ENCODE measurements at regions of chr9 and their contacts with region 1.

Region 1: GRCh38 chr9:35657546-35658136 is at the start of gene RMRP:
- H3K4me3 ChIP-seq: peak within 1 kb of the TSS; percentile 70
- H3K27ac ChIP-seq: peak within 1 kb of the TSS; percentile 93
- H3K4me1 ChIP-seq: peaks cover 8% of the 10 kb centered on the region; the same call in 1 of the 2 replicates
- CTCF ChIP-seq: peak; percentile 89

Region 2: DNA sequence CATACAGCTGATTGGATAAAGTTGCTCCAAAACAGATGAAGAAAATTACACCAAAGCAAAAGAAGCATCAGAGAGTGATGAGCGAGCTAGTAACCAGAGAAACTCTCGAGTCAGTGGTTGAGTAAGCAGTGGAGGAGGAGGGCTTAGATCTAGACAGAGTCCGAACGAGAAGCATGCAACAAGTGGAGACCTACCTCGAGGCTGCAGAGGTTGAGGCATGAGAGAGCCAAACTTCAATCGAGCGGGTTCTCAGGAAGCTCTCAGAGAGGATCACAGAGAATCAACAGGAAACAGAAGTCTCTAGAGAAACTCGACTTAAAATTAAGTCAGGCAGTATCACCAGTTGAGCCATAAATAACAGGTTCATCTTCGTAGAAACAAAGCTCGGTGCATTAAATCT is 161.7 kb before region 1 on chr9:
- CTCF ChIA-PET with region 1: no interaction called
- POLR2A ChIA-PET with region 1: no interaction called
- H3K4me3 ChIP-seq: no peak overlapping the region
- H3K27ac ChIP-seq: no peak overlapping the region
- H3K4me1 ChIP-seq: peaks cover 3% of the 10 kb centered on the region; the same call in 1 of the 2 replicates
- CTCF ChIP-seq: no peak

Region 3: GRCh38 chr9:35628389-35628991 is 29.2 kb before region 1 on chr9:
- CTCF ChIA-PET with region 1: interaction called, 10 read pairs
- POLR2A ChIA-PET with region 1: no interaction called
- H3K4me3 ChIP-seq: no peak overlapping the region
- H3K27ac ChIP-seq: no peak overlapping the region
- H3K4me1 ChIP-seq: no peaks in the 10 kb centered on the region
- CTCF ChIP-seq: no peak

Region 4: DNA sequence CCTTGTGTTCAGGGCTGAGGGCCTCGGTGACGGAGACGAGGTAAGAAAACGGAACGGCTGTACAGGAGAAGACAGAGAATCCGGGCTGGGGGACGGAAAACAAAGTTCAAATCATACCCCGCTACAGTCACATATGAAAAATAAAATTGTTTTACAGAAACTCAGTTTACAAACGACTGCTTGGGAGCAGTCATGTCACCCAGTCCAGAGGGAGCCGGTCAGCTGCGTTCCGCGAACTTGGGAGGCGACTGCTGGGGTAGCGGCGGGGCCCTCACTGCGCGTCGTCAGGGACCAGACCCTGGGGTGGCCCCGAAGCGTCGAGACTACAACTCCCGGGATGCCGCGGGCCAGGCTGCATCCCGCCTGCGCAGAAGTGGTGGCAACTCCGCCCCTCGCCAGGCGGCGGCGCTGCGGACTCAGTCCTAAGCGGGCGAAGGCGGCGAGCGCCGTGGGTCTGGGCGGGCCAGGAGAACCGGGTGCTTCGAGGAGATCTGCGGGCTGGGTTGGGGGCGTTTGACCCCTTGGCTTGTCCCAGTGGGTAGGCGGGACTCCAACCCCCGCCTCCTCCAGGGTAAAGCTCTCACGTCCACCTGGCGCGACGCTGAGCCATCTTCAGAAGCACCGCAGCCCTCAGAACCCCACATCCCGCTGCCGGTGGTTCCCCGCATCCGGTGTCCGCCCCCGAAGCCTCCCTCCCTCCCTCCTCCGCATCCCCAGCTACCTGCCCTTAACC is 10.9 kb before region 1 on chr9:
- CTCF ChIA-PET with region 1: interaction called, 74 read pairs
- POLR2A ChIA-PET with region 1: interaction called, 41 read pairs
- H3K4me3 ChIP-seq: peak overlapping the region; percentile 62
- H3K27ac ChIP-seq: peak overlapping the region; percentile 51
- H3K4me1 ChIP-seq: no peaks in the 10 kb centered on the region
- CTCF ChIP-seq: peak; percentile 94

Region 5: GRCh38 chr9:35690431-35691333 is 33.0 kb after region 1 on chr9:
- CTCF ChIA-PET with region 1: interaction called, 157 read pairs
- POLR2A ChIA-PET with region 1: interaction called, 31 read pairs
- H3K4me3 ChIP-seq: peak overlapping the region; percentile 58
- H3K27ac ChIP-seq: peak overlapping the region; percentile 56; the same call in 1 of the 2 replicates
- H3K4me1 ChIP-seq: peaks cover 3% of the 10 kb centered on the region; the same call in 1 of the 2 replicates
- CTCF ChIP-seq: no peak

Region 6: DNA sequence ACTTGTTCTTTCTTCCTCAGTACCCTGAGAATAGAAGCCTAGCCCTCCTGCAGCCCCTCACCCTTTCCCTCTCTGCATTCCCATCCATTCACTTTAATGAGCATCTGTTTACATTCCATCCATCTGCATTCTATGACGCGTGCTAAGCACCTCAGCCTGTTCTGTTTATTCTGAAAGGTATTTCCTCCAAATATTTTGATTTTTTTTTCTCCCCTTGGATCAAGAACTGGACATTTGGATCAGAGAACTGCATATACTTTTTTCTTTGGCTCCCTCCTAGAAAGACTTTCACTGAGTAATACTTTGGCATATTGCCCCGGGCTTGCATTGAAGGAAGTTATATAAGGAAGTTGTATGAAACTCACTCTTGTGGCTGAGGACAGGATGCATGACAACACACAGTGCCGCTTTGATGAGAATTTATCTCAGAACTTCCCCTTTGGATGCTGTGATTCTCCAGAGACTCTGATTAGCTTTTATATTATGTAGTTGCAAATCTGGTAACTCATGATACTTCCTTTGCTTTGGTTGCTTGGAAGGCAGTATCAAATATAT is 187.2 kb after region 1 on chr9:
- CTCF ChIA-PET with region 1: no interaction called
- POLR2A ChIA-PET with region 1: no interaction called
- H3K4me3 ChIP-seq: no peak overlapping the region
- H3K27ac ChIP-seq: no peak overlapping the region
- H3K4me1 ChIP-seq: no peaks in the 10 kb centered on the region
- CTCF ChIP-seq: no peak

Region 7: GRCh38 chr9:36008774-36009300 is 351.2 kb after region 1 on chr9:
- CTCF ChIA-PET with region 1: no interaction called
- POLR2A ChIA-PET with region 1: no interaction called
- H3K4me3 ChIP-seq: no peak overlapping the region
- H3K27ac ChIP-seq: no peak overlapping the region
- H3K4me1 ChIP-seq: no peaks in the 10 kb centered on the region
- CTCF ChIP-seq: 0 out of 2 replicates have a peak, but pooled peaks have one; percentile 16

Region 8: DNA sequence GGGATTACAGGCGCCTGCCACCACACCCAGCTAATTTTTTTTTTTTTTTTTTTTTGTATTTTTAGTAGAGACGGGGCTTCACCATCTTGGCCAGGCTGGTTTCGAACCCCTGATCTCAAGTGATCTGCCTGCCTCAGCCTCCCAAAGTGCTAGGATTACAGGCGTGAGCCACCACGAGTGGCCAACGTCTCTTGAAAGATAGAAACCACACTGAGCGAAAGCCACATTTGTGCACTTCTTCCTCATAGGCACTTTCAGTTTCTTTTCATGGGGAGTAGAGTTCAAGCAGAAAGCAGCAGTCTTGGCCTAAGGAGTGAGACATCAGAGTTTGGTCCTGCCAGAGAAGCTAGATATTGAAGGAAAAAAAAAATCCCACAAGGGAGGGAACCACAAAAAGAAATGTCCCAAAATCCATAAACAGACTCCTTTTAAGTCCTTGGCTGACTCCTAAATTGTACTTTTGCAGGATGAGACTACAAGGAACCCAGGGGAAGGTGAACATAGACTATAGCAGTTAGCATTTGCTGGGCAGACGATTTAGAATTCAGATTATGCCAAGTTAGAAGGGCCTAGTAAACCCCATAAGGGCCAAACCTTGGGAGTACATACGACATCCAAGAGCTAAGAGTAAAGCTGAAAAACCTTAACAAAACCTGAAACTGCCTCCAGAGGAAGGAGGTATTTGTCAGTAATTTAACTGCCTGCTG is 435.0 kb after region 1 on chr9:
- CTCF ChIA-PET with region 1: no interaction called
- POLR2A ChIA-PET with region 1: no interaction called
- H3K4me3 ChIP-seq: no peak overlapping the region
- H3K27ac ChIP-seq: no peak overlapping the region
- H3K4me1 ChIP-seq: peaks cover 6% of the 10 kb centered on the region; the same call in 1 of the 2 replicates
- CTCF ChIP-seq: no peak